ENCODE measurements at regions of chr12 and their contacts with region 1.

Region 1: DNA sequence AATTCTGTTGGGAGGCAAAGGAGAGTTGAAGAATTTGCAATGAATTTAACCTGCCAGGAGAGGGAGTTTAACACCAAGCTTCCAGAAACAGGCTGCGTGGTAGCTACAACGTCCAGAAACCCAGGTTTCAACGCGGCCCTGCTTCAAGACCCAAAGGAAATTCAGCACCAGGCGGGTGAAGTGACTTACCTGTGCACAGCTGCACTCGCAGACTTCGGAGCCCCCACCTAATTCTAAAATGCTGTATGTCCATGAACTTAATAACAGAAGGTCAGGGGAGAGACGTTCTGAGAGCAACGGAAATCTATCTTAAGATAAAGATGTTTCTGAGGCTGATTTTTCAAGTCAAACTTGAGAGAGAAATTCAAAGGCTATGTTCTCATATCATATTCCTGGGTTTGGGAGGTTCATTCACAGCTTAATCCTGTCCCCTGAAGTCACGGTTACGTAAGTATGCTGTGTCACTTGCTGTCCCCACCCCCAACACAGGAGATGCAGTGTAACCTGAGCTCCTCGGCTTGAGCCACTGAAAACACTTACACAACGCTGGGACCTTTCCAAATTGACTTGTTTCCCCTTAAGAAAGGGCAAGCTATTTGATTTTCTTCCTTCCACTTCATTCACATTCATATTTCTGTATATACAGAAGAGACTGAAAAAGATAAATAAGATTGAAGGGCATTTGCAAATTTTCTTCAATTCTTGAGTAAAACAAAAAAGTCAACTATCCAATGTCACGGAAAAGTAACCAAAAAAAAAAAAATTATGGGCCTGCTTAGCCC is 22.7 kb downstream of the CLIP1 start:
- DNase-seq: peak; percentile 89
- H3K4me3 ChIP-seq: peak overlapping the region; percentile 1
- H3K27ac ChIP-seq: peak overlapping the region; percentile 90
- H3K27me3 ChIP-seq: no peaks in the 10 kb centered on the region
- CTCF ChIP-seq: peak; percentile 73

Region 2: DNA sequence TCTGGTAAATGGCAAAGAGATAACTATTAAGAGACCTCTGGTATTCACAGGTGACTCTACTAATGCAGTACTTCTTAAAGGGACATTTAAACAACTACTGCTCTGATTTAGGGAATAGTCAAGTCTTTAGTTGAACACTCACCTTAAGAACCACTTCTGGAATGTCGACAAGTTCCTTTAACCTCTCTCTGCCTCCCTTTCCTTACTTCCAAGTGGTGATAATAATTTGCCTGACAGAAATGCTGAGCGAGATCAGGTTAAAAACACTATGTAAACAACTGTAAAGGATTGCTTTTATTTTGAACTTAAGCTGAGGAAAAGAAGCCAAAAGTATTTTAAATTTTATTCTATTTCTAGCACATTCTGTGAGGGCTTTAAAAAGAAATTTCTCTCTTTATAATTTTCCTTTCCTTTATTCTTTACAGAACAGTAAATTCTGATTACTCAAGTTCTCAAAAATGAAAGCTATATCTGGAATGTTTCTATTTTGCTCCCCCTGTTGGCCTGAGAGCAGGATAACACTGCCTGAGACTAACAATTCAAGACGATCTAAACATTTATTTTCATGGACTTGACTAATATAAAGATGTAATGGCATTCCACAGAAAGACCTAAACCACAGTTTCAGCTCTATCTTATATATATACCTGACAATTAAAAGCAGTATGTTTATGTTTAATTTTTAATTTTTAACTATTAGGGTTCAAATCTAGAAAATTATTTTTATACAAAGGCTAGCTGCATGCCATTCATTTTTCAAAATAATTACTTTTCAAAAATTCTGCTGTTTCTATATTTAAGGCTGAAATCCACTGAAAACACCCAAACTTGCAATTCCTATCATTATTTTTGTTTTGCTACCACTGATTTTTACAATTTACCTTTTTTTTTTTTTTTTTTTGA is 71.8 kb after region 1 on chr12:
- in situ Hi-C with region 1: loop called (anchors 10 kb)
- DNase-seq: no peak
- H3K4me3 ChIP-seq: no peak overlapping the region
- H3K27ac ChIP-seq: peak overlapping the region; percentile 47
- H3K27me3 ChIP-seq: no peaks in the 10 kb centered on the region
- CTCF ChIP-seq: peak; percentile 78